ENCODE measurements at regions of chr7 and their contacts with region 1.

Region 1: GRCh38 chr7:99374103-99375064 is at the start of gene ARPC1B:
- DNase-seq: peak; percentile 60
- H3K4me3 ChIP-seq: peak within 1 kb of the TSS; percentile 66 to 95 (median 77)
- H3K27ac ChIP-seq: peak within 1 kb of the TSS; percentile 76
- H3K4me1 ChIP-seq: peaks cover 16% of the 10 kb centered on the region
- H3K27me3 ChIP-seq: no peaks in the 10 kb centered on the region
- CTCF ChIP-seq: no peak
- POLR2A ChIP-seq: peak; percentile 85
- total RNA-seq, gene ARPC1B: 232 and 294 TPM in 2 replicates

Region 2: DNA sequence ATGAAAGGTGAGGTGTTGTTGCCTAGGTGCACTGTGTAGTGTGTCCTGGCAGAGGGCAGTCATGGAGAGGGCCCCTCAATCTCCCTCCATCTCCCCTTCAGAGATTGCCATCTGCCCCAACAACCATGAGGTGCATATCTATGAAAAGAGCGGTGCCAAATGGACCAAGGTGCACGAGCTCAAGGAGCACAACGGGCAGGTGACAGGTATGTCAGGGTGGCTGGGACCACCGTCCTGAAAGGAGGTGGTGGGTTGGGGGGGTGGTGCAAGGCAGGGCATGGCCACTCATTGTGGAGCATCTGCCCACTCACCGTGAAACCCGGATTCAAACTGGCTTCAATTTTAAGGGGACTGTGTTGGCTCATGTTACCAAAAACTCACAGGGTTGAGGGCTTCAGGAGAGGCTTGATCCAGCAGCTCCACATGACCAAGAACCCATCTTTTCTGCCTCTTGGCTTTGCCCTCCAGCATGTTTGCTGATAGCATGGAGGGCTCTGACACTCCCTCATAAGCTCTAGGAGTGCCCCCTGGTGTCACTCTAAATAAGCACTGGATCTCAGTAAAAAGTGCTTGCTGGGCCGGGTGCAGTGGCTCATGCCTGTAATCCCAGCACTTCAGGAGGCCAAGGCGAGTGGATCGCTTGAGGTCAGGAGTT is 12.3 kb after region 1 on chr7:
- CTCF ChIA-PET with region 1: interaction called, 9 read pairs
- POLR2A ChIA-PET with region 1: no interaction called
- dilution Hi-C with region 1: no loop called
- intact Hi-C with region 1: loop called (anchors 1 kb)
- DNase-seq: peak; percentile 42
- H3K4me3 ChIP-seq: no peak overlapping the region
- H3K27ac ChIP-seq: no peak overlapping the region
- H3K4me1 ChIP-seq: no peaks in the 10 kb centered on the region
- H3K27me3 ChIP-seq: no peaks in the 10 kb centered on the region
- CTCF ChIP-seq: peak; percentile 27 to 29
- POLR2A ChIP-seq: peak; percentile 33

Region 3: GRCh38 chr7:99392677-99393354 is 18.4 kb after region 1 on chr7:
- CTCF ChIA-PET with region 1: no interaction called
- POLR2A ChIA-PET with region 1: no interaction called
- dilution Hi-C with region 1: no loop called
- intact Hi-C with region 1: loop called (anchors 2 kb)
- DNase-seq: peak; percentile 50
- H3K4me3 ChIP-seq: peak overlapping the region in 1 of 3 experiments; percentile 40
- H3K27ac ChIP-seq: peak overlapping the region; percentile 31
- H3K4me1 ChIP-seq: peaks cover 16% of the 10 kb centered on the region
- H3K27me3 ChIP-seq: no peaks in the 10 kb centered on the region
- CTCF ChIP-seq: no peak
- POLR2A ChIP-seq: peak; percentile 35

Region 4: GRCh38 chr7:99408379-99409191 is 34.2 kb after region 1 on chr7 and contains the starts of genes BUD31 and PDAP1:
- CTCF ChIA-PET with region 1: interaction called, 6 read pairs
- POLR2A ChIA-PET with region 1: interaction called, 6 read pairs
- dilution Hi-C with region 1: no loop called
- intact Hi-C with region 1: loop called (anchors 1 kb)
- DNase-seq: peak; percentile 98
- H3K4me3 ChIP-seq: peak within 1 kb of the TSS; percentile 65 to 99 (median 96)
- H3K27ac ChIP-seq: peak within 1 kb of the TSS; percentile 79
- H3K4me1 ChIP-seq: peaks cover 21% of the 10 kb centered on the region
- H3K27me3 ChIP-seq: no peaks in the 10 kb centered on the region
- CTCF ChIP-seq: no peak
- POLR2A ChIP-seq: peak; percentile 91
- total RNA-seq, gene BUD31: 113 and 122 TPM in 2 replicates
- total RNA-seq, gene PDAP1: 148 and 150 TPM in 2 replicates

Measured in endothelial cell of umbilical vein (primary cell).